ENCODE measurements at regions of chr10 and their contacts with region 1.

Region 1: DNA sequence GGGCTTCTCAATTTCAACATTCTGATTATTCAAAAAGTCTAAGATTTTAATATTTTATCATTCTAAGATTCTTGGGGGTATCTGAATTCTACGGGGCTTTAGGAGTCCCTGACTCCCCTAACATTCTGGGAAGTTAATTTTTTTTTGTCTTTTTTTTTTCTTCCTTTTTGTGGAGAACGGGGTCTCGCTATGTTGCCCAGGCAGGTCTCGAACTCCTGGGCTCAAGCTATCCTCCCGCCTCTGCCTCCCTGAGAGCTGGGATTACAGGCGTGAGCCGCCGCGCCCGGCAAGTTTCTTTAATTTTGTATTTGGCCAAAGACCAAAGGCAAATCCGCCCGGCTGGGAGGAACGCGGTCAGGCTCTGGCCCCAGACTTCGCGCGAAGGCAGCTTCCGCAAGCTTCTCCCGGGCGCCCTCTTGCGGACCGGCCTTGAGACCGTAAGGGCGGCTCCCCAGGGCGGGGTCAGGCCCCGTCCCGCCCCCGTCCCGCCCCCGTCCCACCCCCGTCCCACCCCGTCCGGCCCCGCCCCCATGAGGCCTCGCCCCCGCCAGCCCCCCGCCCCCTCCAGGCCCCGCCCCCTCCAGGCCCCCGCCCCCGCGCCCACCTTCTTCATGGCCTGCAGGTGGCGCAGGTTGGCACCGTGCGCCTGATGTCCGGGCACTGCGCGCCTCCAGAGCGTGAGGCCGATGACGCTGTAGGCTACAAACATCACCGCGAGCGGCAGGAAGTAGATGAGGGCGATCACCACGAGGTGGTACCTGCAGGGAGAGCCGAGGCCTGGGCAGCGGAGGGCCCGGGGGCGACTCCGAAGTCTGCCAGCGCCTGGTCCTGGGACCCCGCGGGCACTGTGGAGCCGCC is 8.2 kb downstream of the TACR2 start:
- DNase-seq: peak; percentile 59
- H3K4me3 ChIP-seq: peak overlapping the region; percentile 51
- CTCF ChIP-seq: peak; percentile 88

Region 2: DNA sequence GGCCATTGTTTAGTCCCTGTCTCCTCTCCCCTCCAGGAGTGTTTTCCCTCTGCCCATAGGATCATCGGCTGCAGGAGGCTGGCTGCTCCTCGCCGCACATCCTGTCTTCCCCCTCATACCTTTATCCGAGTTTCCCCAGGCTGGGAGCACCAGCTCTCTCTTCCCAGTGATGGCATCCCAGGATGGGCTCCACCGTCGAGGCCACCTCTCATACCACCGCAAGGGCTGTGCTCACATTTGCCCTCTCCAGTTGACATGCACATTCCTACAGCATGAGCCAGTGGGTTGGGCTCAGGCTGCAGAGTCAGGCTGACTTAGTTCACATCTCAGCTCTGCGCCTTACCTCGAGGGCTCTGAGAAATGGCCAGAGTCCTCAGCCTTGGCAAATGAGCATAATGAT is 176.3 kb before region 1 on chr10:
- CTCF ChIA-PET with region 1: interaction called, 81 read pairs
- POLR2A ChIA-PET with region 1: no interaction called
- DNase-seq: peak; percentile 38
- H3K4me3 ChIP-seq: no peak overlapping the region
- CTCF ChIP-seq: no peak

Region 3: GRCh38 chr10:69383558-69383957 is 25.0 kb before region 1 on chr10:
- CTCF ChIA-PET with region 1: interaction called, 40 read pairs
- POLR2A ChIA-PET with region 1: no interaction called
- DNase-seq: peak; percentile 19
- H3K4me3 ChIP-seq: no peak overlapping the region
- CTCF ChIP-seq: peak; percentile 24

Region 4: GRCh38 chr10:69397972-69398371 is 10.6 kb before region 1 on chr10:
- CTCF ChIA-PET with region 1: interaction called, 24 read pairs
- POLR2A ChIA-PET with region 1: no interaction called
- DNase-seq: no peak
- H3K4me3 ChIP-seq: no peak overlapping the region
- CTCF ChIP-seq: no peak

Region 5: DNA sequence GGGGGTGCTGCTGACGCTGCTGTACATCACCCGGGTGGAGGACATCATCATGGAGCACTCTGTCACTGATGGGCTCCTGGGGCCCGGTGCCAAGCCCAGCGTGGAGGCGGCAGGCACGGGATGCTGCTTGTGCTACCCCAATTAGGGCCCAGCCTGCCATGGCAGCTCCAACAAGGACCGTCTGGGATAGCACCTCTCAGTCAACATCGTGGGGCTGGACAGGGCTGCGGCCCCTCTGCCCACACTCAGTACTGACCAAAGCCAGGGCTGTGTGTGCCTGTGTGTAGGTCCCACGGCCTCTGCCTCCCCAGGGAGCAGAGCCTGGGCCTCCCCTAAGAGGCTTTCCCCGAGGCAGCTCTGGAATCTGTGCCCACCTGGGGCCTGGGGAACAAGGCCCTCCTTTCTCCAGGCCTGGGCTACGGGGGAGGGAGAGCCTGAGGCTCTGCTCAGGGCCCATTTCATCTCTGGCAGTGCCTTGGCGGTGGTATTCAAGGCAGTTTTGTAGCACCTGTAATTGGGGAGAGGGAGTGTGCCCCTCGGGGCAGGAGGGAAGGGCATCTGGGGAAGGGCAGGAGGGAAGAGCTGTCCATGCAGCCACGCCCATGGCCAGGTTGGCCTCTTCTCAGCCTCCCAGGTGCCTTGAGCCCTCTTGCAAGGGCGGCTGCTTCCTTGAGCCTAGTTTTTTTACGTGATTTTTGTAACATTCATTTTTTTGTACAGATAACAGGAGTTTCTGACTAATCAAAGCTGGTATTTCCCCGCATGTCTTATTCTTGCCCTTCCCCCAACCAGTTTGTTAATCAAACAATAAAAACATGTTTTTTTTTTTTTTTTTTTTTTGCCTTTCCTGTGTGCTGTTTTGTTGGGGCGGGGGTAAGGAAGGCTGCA is 98.5 kb after region 1 on chr10:
- CTCF ChIA-PET with region 1: interaction called, 50 read pairs
- POLR2A ChIA-PET with region 1: interaction called, 3 read pairs
- DNase-seq: no peak
- H3K4me3 ChIP-seq: no peak overlapping the region
- CTCF ChIP-seq: no peak

Region 6: GRCh38 chr10:69537449-69537848 is 128.9 kb after region 1 on chr10:
- CTCF ChIA-PET with region 1: no interaction called
- POLR2A ChIA-PET with region 1: no interaction called
- DNase-seq: no peak
- H3K4me3 ChIP-seq: no peak overlapping the region
- CTCF ChIP-seq: no peak

Region 7: GRCh38 chr10:69819716-69820506 is 411.4 kb after region 1 on chr10:
- CTCF ChIA-PET with region 1: no interaction called
- POLR2A ChIA-PET with region 1: no interaction called
- DNase-seq: no peak
- H3K4me3 ChIP-seq: no peak overlapping the region
- CTCF ChIP-seq: no peak

Region 8: DNA sequence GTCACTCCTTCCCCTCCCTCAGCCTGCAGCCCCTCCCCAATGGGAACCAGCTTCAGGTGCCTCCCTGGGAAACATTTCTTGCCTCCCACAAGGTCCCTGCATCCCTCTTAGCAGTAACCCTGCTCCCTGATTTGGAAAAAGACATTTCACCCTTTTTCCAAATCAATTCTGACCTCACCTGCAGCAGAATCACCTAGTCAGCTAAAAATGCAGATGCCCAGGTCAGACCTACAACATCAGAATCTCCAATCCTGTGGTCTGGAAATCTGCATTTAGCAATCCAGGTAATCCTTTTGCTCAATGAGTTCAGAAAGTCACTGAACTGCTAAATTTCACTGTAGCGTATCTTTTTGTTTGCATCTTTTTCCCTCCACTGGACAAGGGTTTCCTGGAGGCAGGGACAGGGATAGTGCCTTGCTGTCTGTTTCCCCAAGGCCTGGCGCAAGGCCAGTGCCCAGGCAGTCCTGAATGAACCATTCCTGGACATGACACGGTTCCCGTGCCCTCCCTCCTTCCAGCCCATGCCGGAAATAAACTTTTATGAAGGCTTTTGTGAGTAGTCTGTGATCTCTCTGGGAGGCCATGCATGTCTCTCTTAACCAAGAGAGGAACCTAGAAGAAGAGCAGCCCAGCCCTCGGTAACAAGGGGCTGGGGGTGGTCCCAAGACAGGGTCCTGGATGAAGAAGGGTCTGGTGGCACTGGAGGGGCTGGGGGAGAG is 437.2 kb after region 1 on chr10:
- CTCF ChIA-PET with region 1: no interaction called
- POLR2A ChIA-PET with region 1: no interaction called
- DNase-seq: no peak
- H3K4me3 ChIP-seq: no peak overlapping the region
- CTCF ChIP-seq: no peak